Right ventricle myocardium inferior (tissue), 1 donor: ENCODE measurements at regions of chr1 and their contacts with region 1.

Region 1: GRCh38 chr1:149962123-149962548 is 25.5 kb upstream of the MTMR11 start:
- DNase-seq: peak; percentile 55
- ATAC-seq: peak; percentile 82

Region 2: GRCh38 chr1:150010393-150011115 is 48.4 kb after region 1 on chr1 and contains the start of gene OTUD7B:
- intact Hi-C with region 1: loop called (anchors 5 kb)
- DNase-seq: peak; percentile 89
- ATAC-seq: peak; percentile 98
- total RNA-seq, gene OTUD7B: 24.5 TPM

Region 3: DNA sequence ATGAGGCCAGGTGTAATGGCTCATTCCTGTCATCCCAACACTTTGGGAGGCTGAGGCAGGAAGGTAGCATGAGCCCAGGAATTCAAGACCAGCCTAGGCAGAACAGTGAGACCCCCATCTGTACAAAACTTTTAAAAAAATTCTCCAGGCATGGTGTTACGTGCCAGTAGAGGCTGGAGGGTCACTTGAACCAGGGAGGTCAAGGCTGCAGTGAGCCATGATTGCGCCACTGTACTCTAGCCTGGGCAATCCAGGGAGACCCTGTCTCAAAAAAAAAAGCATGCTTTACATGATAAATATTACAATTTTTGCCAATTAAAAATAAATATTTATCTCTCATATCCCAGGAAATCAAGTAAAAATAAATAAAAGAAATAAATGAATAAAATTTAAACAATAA is 87.8 kb after region 1 on chr1:
- intact Hi-C with region 1: loop called (anchors 1 kb)
- DNase-seq: no peak
- ATAC-seq: no peak

Region 4: GRCh38 chr1:150168960-150169601 is 206.9 kb after region 1 on chr1:
- intact Hi-C with region 1: loop called (anchors 2 kb)
- DNase-seq: peak; percentile 85
- ATAC-seq: peak; percentile 61

Region 5: DNA sequence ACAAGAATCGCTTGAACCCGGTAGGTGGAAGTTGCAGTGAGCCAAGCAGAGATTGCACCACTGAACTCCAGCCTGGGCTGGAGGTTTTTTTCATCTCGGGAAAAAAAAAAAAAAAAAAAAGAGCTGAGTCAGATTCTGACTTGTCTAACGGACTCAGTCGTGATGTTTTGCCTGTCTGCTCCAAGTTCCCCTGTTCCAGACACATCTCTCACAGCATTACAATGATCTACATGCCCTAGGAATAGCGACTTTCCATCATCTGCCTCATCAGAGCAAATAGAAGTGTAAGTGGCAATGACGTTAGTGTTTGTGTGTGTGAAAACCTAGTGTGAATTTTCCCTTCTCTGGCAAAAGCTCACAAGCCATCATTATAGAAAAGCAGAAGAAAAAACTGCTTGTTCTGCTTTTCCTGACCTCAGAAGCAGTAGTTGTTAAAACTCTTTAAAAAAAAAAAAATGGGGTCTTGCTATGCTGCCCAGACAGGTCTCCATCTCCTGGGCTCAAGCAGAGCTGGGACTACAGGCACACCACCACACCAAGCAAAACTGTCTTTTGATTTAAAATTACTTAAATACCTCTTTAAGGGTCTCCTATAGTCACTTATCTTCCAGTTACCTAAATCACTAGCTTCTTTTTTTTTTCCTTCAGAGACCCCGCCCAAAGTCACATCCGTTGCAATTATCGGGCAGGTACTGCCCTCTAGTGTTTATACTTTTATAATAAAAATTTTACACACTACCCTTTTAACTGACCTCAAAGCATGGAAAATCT is 224.8 kb after region 1 on chr1:
- intact Hi-C with region 1: loop called (anchors 5 kb)
- DNase-seq: no peak
- ATAC-seq: peak; percentile 66